Mammary epithelial cell (primary cell): ENCODE measurements at regions of chr3 and their contacts with region 1.

Region 1: GRCh38 chr3:131033480-131034080 is 6.9 kb downstream of the NEK11 start:
- DNase-seq: peak; percentile 31
- H3K4me3 ChIP-seq: no peak overlapping the region
- H3K27ac ChIP-seq: no peak overlapping the region
- H3K4me1 ChIP-seq: no peaks in the 10 kb centered on the region
- H3K27me3 ChIP-seq: no peaks in the 10 kb centered on the region
- CTCF ChIP-seq: peak; percentile 59 to 64

Region 2: GRCh38 chr3:129809297-129809696 is 1224.3 kb before region 1 on chr3:
- CTCF ChIA-PET with region 1: no interaction called
- dilution Hi-C with region 1: no loop called
- in situ Hi-C with region 1: no loop called
- intact Hi-C with region 1: no loop called
- DNase-seq: no peak
- H3K4me3 ChIP-seq: no peak overlapping the region
- H3K27ac ChIP-seq: no peak overlapping the region
- H3K4me1 ChIP-seq: no peaks in the 10 kb centered on the region
- H3K27me3 ChIP-seq: no peaks in the 10 kb centered on the region
- CTCF ChIP-seq: no peak

Region 3: DNA sequence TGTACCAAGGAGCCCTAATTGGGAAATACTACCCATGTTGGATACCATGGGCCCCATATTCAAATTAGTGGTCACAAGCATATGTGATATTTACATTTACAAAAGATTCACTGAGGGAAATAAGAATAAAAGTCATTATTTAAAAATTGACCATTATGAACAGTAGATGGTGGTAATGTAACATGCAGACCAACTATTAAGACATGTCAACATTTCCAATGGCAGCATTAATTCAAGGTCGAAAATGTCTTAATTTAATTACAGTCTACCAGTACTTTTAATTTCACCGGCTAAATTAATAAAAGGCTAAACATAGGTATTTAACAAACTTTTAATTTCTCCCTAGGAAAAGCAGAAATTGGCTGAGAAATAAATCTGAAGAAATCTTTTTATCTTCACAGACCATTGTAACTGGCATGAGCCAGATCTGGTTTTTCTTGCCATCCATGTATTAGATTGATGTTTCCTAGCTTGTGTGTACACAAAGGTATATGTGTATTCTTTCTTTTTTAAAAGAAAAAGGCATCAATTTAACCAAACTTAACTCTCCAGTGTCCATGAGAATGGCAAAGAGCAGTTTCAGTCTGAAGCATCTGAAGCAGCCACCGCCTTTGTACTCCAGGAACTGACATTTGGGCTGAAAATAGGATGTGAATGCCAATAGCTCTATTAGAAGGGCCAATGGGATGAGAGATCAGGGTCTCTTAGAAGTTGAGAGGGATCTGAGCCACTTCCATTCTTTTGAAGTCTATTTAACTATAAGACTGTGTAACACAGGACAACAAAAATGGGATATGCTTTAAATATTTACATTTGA is 19.7 kb after region 1 on chr3:
- CTCF ChIA-PET with region 1: no interaction called
- dilution Hi-C with region 1: no loop called
- in situ Hi-C with region 1: no loop called
- intact Hi-C with region 1: no loop called
- DNase-seq: no peak
- H3K4me3 ChIP-seq: no peak overlapping the region
- H3K27ac ChIP-seq: no peak overlapping the region
- H3K4me1 ChIP-seq: no peaks in the 10 kb centered on the region
- H3K27me3 ChIP-seq: no peaks in the 10 kb centered on the region
- CTCF ChIP-seq: peak; percentile 23 to 33

Region 4: GRCh38 chr3:131142580-131142979 is 109.0 kb after region 1 on chr3:
- CTCF ChIA-PET with region 1: no interaction called
- dilution Hi-C with region 1: no loop called
- in situ Hi-C with region 1: no loop called
- intact Hi-C with region 1: loop called (anchors 1 kb)
- DNase-seq: no peak
- H3K4me3 ChIP-seq: no peak overlapping the region
- H3K27ac ChIP-seq: no peak overlapping the region
- H3K4me1 ChIP-seq: no peaks in the 10 kb centered on the region
- H3K27me3 ChIP-seq: no peaks in the 10 kb centered on the region
- CTCF ChIP-seq: peak in 1 of 2 donors; percentile 8

Region 5: DNA sequence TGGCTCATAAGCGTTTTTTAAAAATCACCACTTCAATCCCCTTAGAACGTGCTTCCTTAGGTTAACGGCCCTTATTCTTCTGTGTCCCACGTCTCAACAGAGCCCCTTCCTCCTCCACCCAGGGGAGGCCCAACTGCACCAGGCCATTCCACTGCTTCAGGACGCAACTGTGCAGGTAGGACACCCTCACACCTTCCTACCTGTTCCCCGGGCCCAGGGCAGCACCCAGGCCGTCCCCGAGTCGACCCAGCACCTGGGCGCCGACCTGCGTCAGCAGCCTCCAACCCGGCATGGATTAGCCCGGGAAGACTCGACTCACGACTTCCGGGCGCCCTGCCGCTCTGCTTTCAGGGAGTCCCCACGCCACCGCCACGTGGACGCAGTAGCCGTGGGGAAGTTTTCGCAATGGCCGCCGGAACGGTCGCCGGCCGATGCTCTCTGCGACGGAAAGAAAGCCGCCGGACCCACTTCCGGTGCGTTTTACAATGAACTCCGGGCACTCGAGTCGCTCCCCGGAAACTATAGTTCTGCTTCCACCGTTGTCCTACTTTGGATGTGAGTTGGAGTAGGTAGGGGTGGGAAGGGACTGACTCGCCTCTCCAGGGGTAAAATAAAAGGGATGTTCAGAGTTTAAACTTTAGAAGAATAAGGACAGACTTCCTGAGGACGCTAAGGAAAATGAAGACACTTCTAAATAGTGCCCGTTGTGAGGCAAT is 469.1 kb after region 1 on chr3 and contains the start of gene MRPL3:
- CTCF ChIA-PET with region 1: no interaction called
- dilution Hi-C with region 1: no loop called
- in situ Hi-C with region 1: no loop called
- intact Hi-C with region 1: loop called (anchors 10 kb)
- DNase-seq: peak; percentile 86
- H3K4me3 ChIP-seq: peak within 1 kb of the TSS; percentile 78 to 99 (median 88)
- H3K27ac ChIP-seq: peak within 1 kb of the TSS; percentile 72
- H3K4me1 ChIP-seq: peaks cover 15% of the 10 kb centered on the region
- H3K27me3 ChIP-seq: no peaks in the 10 kb centered on the region
- CTCF ChIP-seq: no peak
- total RNA-seq, gene MRPL3: 78.9 to 103 TPM

Region 6: GRCh38 chr3:131794766-131795388 is 761.3 kb after region 1 on chr3:
- CTCF ChIA-PET with region 1: no interaction called
- dilution Hi-C with region 1: no loop called
- in situ Hi-C with region 1: no loop called
- intact Hi-C with region 1: loop called (anchors 10 kb)
- DNase-seq: peak; percentile 29
- H3K4me3 ChIP-seq: no peak overlapping the region
- H3K27ac ChIP-seq: no peak overlapping the region
- H3K4me1 ChIP-seq: no peaks in the 10 kb centered on the region
- H3K27me3 ChIP-seq: no peaks in the 10 kb centered on the region
- CTCF ChIP-seq: peak; percentile 89 to 95